ENCODE measurements at regions of chr1 and their contacts with region 1.

Region 1: GRCh38 chr1:203127666-203128430 is at the start of gene ADORA1:
- DNase-seq: peak; percentile 38
- ATAC-seq: peak; percentile 67
- H3K4me3 ChIP-seq: peak within 1 kb of the TSS; percentile 33; the same call in 1 of the 2 replicates
- H3K27ac ChIP-seq: no peak within 1 kb of the TSS
- H3K4me1 ChIP-seq: no peaks in the 10 kb centered on the region
- H3K27me3 ChIP-seq: peaks cover 41% of the 10 kb centered on the region
- CTCF ChIP-seq: no peak
- total RNA-seq, gene ADORA1: 1.4 and 3.9 TPM in 2 replicates

Region 2: DNA sequence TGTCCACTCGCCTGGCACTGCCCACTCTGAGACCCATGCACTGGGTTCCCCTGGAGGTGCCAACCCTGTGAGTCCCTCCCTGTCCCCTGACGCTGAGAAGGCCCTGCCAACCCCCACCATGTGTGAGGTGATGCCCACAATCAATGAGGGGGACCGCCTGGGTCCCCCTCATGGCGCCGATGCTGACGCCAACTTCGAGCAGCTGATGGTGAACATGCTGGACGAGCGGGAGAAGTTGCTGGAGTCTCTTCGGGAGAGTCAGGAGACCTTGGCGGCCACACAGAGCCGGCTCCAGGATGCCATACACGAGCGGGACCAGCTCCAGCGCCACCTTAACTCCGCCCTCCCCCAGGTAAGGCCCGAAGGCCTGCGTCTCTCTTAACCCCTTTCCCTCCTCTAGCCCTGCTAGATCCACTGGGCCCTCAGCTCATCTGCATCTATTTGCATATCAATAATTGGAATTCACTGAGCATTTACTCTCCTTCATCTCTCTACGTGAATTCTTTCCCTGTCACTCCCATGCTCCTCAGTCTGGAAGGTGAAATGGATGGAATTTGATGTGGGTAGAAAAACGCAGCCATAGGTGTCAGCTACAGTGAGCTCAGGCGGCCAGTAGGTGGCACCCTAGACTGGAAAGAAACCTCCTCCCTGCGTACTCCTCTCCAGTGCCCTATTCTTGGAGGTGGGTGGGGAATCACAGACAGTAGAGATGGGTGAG is 88.8 kb before region 1 on chr1:
- CTCF ChIA-PET with region 1: interaction called, 3 read pairs
- POLR2A ChIA-PET with region 1: no interaction called
- intact Hi-C with region 1: loop called (anchors 5 kb)
- DNase-seq: peak; percentile 81
- ATAC-seq: peak; percentile 85
- H3K4me3 ChIP-seq: no peak overlapping the region
- H3K27ac ChIP-seq: no peak overlapping the region
- H3K4me1 ChIP-seq: peaks cover 11% of the 10 kb centered on the region; the same call in 1 of the 2 replicates
- H3K27me3 ChIP-seq: no peaks in the 10 kb centered on the region
- CTCF ChIP-seq: peak; percentile 98

Region 3: GRCh38 chr1:203172128-203173010 is 44.5 kb after region 1 on chr1:
- CTCF ChIA-PET with region 1: no interaction called
- POLR2A ChIA-PET with region 1: no interaction called
- intact Hi-C with region 1: no loop called
- DNase-seq: peak; percentile 81
- ATAC-seq: peak; percentile 84
- H3K4me3 ChIP-seq: no peak overlapping the region
- H3K27ac ChIP-seq: no peak overlapping the region
- H3K4me1 ChIP-seq: peaks cover 6% of the 10 kb centered on the region
- H3K27me3 ChIP-seq: no peaks in the 10 kb centered on the region
- CTCF ChIP-seq: peak; percentile 86

Region 4: DNA sequence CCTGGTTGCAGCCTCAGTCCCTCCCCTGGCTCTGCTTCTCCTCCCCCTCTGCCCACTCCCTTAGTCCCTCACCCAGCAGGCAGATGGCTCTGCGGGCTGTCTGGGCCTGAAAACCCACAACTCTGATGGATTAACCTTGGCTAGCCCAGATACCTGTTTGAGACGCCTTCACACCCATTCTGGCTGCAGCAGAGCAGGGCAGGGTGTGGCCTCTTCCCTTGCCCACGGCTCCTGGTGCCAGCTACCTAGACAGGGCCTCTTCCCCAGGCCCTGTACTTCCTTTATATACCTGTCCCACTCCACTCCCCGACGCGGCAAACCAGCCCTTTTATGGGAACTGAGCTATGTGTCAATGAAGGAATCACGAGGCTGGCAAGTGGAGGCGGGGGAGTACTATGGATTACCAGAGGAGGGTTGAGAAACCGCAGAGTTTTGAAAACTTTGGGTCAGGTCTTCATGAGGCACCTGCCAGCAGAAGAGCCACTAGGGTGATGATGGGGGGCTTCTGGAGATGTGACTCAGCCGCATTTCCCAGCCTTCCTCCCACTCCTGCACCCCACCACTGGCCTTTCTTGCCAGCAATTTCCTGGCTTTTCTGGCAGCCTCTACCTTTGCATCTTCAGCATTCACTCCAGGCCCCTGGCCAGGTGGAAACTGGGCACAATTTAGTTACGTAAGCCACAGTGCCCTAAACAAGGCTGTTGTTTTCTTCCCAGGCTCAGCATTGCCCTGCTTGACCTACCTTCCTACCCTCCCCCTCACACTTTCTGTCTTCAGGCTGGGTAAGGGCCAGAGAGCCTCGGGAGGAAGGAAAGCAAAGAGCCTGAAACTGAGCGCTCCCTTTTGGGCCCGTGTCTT is 58.8 kb after region 1 on chr1 and contains the start of gene CHI3L1:
- CTCF ChIA-PET with region 1: no interaction called
- POLR2A ChIA-PET with region 1: no interaction called
- intact Hi-C with region 1: no loop called
- DNase-seq: no peak
- ATAC-seq: no peak
- H3K4me3 ChIP-seq: no peak within 1 kb of the TSS
- H3K27ac ChIP-seq: no peak within 1 kb of the TSS
- H3K4me1 ChIP-seq: no peaks in the 10 kb centered on the region
- H3K27me3 ChIP-seq: peaks cover 19% of the 10 kb centered on the region; the same call in 1 of the 2 replicates
- CTCF ChIP-seq: no peak
- total RNA-seq, gene CHI3L1: not detected in 2 replicates

Measured in PC-3 (cell line).